ENCODE measurements at regions of chr1 and their contacts with region 1.

Region 1: DNA sequence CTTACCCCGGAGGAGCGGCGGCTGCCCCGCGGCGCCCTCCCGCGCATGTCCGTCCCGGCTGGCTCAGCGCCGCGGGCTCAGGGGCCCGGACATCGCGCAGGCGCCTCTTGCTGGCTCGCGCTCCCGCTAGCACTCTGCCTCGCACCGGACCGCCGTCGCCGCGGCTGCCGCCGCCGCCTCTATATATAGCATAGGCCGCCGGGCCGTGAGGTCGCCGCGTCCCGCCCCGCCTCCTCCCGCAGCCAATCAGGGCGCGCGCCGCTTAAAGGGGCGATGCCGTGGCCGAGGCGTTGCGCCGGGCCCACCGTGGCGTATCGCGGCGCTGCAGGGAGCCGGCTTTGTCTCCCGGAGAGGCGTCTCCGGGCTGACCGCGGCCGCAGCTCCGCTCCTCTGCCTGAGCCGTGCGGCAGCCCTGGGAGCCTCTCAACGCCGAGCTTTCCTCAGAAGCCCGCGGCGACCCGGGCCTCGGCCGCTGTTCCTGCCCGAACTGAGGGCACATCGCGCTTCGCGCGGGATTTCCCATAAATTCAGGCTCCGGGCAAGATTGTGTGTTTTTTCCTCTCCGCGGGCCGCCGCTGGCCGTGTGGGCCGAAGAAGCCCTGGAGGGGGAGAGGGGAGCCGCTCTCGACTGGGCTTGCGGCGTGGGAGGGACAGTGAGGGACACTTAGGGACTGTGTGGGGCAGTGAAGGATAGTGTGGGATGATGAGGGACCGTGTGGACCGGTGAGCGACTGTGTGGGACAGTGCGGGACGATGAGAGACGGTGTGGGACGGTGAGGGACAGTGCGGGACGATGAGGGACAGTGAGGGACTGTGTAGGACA is at the start of gene ERRFI1:
- DNase-seq: peak; percentile 93 to 97
- ATAC-seq: peak; percentile 96 to 99 (median 97)
- H3K4me3 ChIP-seq: peak within 1 kb of the TSS; percentile 51 to 91 (median 88)
- H3K27ac ChIP-seq: peak within 1 kb of the TSS; percentile 87 to 94 (median 90)
- H3K4me1 ChIP-seq: peaks cover 0 to 59% (median 35%) of the 10 kb centered on the region in 9 donors
- H3K27me3 ChIP-seq: peaks cover 0 to 58% (median 0%) of the 10 kb centered on the region in 7 donors
- CTCF ChIP-seq: no peak
- total RNA-seq, gene ERRFI1: 5.8 to 15.9 (median 10.0) TPM

Region 2: GRCh38 chr1:7526867-7527732 is 499.3 kb before region 1 on chr1:
- intact Hi-C with region 1: no loop called
- DNase-seq: no peak
- ATAC-seq: no peak
- H3K4me3 ChIP-seq: no peak overlapping the region
- H3K27ac ChIP-seq: no peak overlapping the region
- H3K4me1 ChIP-seq: peaks cover 0 to 3% (median 0%) of the 10 kb centered on the region in 9 donors
- H3K27me3 ChIP-seq: no peaks in the 10 kb centered on the region
- CTCF ChIP-seq: no peak

Region 3: GRCh38 chr1:8090241-8090702 is 63.9 kb after region 1 on chr1:
- intact Hi-C with region 1: no loop called
- DNase-seq: no peak
- ATAC-seq: peak in 5 of 8 donors; percentile 30 to 72 (median 67)
- H3K4me3 ChIP-seq: no peak overlapping the region
- H3K27ac ChIP-seq: peak overlapping the region in 7 of 10 donors; percentile 35 to 83 (median 53)
- H3K4me1 ChIP-seq: peaks cover 0 to 38% (median 11%) of the 10 kb centered on the region in 9 donors
- H3K27me3 ChIP-seq: no peaks in the 10 kb centered on the region
- CTCF ChIP-seq: no peak

Region 4: GRCh38 chr1:8121261-8122170 is 95.2 kb after region 1 on chr1:
- intact Hi-C with region 1: loop called in 1 of 10 experiments (anchors 5 kb)
- DNase-seq: peak in 1 of 2 donors; percentile 21
- ATAC-seq: peak in 6 of 8 donors; percentile 39 to 80 (median 50)
- H3K4me3 ChIP-seq: peak overlapping the region in 1 of 10 donors; percentile 18
- H3K27ac ChIP-seq: peak overlapping the region; percentile 0 to 81 (median 56)
- H3K4me1 ChIP-seq: peaks cover 0 to 49% (median 36%) of the 10 kb centered on the region in 9 donors
- H3K27me3 ChIP-seq: no peaks in the 10 kb centered on the region
- CTCF ChIP-seq: no peak

Region 5: DNA sequence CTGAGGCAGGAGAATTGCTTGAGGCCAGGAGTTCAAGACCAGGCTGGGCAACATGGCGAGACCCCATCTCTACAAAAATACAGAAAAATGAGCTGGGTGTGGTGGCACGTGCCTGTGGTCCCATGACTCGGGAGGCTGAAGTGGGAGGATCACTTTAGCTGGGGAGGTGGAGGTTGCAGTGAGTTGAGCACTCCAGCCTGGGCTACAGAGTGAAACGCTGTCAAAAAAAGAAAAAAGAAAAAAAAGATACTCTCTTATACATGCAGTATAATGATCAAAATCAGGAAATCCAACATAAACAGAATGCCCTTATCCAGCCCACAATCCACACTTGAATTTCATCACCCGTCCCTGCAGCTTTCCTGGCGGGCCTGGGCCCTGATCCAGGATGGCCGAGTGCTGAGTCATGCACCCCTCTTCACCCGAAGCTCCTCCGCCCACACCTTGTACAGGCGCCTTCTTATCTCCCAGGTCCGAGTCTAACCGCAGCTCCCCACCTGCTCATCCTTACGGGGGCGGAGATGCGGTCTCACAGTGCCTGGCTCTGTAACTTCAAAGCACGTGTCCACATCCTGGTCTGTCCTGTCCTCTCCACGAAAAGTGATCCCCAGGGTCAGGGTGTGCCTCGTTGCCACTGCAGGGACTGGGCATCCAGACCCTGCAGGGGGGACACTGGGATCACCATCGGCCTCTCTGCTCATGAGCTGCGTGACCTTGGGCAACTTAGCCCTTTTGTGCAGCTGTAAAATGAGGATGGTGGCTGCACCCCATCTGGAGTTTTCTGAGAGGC is 171.3 kb after region 1 on chr1:
- intact Hi-C with region 1: no loop called
- DNase-seq: peak; percentile 26 to 54
- ATAC-seq: peak in 5 of 8 donors; percentile 16 to 55 (median 29)
- H3K4me3 ChIP-seq: no peak overlapping the region
- H3K27ac ChIP-seq: peak overlapping the region in 1 of 10 donors; percentile 14
- H3K4me1 ChIP-seq: peaks cover 0 to 32% (median 12%) of the 10 kb centered on the region in 9 donors
- H3K27me3 ChIP-seq: no peaks in the 10 kb centered on the region
- CTCF ChIP-seq: no peak

Region 6: GRCh38 chr1:8217011-8217711 is 190.8 kb after region 1 on chr1:
- intact Hi-C with region 1: loop called in 3 of 10 experiments (anchors 5 to 10 kb)
- DNase-seq: peak in 1 of 2 donors; percentile 51
- ATAC-seq: peak; percentile 76 to 93 (median 86)
- H3K4me3 ChIP-seq: peak overlapping the region; percentile 14 to 64 (median 57)
- H3K27ac ChIP-seq: peak overlapping the region; percentile 17 to 84 (median 66)
- H3K4me1 ChIP-seq: peaks cover 0 to 72% (median 19%) of the 10 kb centered on the region in 9 donors
- H3K27me3 ChIP-seq: peaks cover 0 to 12% (median 0%) of the 10 kb centered on the region in 7 donors
- CTCF ChIP-seq: peak in 4 of 9 donors; percentile 12 to 41 (median 26)

Region 7: GRCh38 chr1:8314346-8315280 is 288.2 kb after region 1 on chr1:
- intact Hi-C with region 1: loop called (anchors 1 to 5 kb)
- DNase-seq: peak; percentile 68 to 69
- ATAC-seq: peak; percentile 68 to 85 (median 77)
- H3K4me3 ChIP-seq: no peak overlapping the region
- H3K27ac ChIP-seq: no peak overlapping the region
- H3K4me1 ChIP-seq: peaks cover 3 to 35% (median 16%) of the 10 kb centered on the region in 9 donors
- H3K27me3 ChIP-seq: peaks cover 0 to 48% (median 0%) of the 10 kb centered on the region in 7 donors
- CTCF ChIP-seq: peak; percentile 71 to 88 (median 84)

Region 8: DNA sequence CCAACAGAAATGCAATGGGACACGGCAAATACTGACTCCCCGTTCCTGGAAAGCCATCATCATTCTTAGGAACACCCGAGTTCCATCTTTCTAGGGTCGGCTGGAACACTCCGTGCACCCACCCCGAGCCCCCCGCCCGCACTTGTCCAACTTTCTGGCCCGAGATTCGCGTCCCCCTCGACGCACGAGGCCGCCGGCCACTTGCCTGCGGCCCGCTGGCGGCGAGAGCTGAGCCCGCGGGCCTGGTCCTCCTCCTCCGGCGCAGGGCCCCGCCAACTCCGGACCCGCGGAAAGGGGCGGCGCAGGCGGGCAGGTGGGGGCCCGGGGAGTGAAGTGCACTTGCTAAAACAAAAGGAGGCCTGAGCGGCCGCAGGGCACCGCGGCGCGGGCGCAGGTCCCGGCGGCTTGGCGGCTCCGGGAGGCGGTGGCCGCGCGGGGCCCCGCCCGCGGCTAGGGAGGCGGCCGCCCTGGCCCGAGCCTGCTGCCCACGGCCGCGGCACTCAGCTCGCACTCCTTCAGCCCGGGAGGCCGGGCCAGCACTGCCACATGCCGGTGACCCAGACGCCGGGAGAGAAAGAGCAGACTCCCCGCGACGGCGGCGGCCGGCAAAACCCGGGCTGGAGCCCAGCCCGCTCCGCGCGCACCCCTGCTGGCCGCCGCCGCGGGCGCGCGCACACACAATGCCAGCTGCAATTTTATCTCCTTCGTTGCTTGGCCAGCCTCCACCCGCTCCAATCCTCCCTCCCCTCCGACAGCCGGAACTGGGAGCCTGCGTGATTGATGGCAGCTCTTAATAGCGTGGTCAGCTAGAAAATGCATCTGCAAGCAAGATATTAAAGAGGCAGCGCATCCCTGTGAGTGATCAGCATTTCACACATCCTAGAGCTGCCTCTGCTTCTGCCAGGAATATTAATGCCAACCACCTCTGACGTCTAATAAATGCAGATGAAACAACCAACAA is 676.8 kb after region 1 on chr1:
- intact Hi-C with region 1: loop called in 1 of 10 experiments (anchors 10 kb)
- DNase-seq: peak; percentile 90 to 92
- ATAC-seq: peak; percentile 92 to 97 (median 95)
- H3K4me3 ChIP-seq: peak overlapping the region; percentile 51 to 89 (median 67)
- H3K27ac ChIP-seq: peak overlapping the region; percentile 77 to 92 (median 86)
- H3K4me1 ChIP-seq: peaks cover 4 to 77% (median 49%) of the 10 kb centered on the region in 9 donors
- H3K27me3 ChIP-seq: no peaks in the 10 kb centered on the region
- CTCF ChIP-seq: peak in 5 of 9 donors; percentile 10 to 45 (median 40)

Region 9: GRCh38 chr1:8879922-8880676 is 853.7 kb after region 1 on chr1:
- intact Hi-C with region 1: no loop called
- DNase-seq: peak in 1 of 2 donors; percentile 42
- ATAC-seq: no peak
- H3K4me3 ChIP-seq: peak overlapping the region in 3 of 10 donors; percentile 84 to 97 (median 91)
- H3K27ac ChIP-seq: peak overlapping the region in 9 of 10 donors; percentile 93 to 99 (median 98)
- H3K4me1 ChIP-seq: peaks cover 5 to 44% (median 34%) of the 10 kb centered on the region in 9 donors
- H3K27me3 ChIP-seq: no peaks in the 10 kb centered on the region
- CTCF ChIP-seq: no peak

Measured in heart right ventricle (tissue), 16 donors.